ENCODE measurements at regions of chr7 and their contacts with region 1.

Region 1: GRCh38 chr7:64098-64915 is 128.1 kb upstream of the FAM20C start:
- DNase-seq: peak; percentile 42
- H3K4me3 ChIP-seq: no peak overlapping the region
- H3K27ac ChIP-seq: no peak overlapping the region
- H3K4me1 ChIP-seq: peaks cover 10% of the 10 kb centered on the region
- H3K27me3 ChIP-seq: no peaks in the 10 kb centered on the region
- CTCF ChIP-seq: peak; percentile 49 to 53

Region 2: DNA sequence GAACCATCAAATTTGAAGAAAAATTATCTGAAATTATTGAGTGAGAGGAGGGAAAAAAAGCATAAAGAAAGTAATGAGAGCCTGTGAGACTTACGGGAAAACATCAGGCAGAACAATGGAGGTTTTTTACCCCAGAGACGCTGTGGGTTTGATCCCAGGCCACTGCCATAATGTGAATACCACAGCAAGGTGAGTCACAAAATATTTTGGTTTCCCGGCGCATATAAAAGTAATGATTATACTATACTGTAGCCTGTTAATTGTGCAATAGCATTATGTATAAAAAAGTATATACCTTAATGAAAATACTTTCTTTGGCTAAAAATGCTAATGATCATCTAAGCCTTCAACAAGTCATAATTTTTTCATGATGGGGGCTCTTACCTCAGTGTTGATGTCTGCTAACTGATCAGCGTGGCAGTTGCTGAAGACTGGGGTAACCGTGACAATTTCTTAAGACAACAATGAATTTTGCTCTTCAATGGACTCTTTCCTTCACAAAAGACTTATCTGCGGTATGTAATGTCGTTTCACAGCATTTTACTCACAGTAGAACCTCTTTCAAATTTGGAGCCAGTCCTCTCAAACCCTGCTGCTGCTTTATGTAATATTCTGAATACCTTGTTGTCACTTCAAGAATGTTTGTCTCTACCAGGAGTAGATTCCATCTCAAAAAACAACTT is 31.0 kb after region 1 on chr7:
- CTCF ChIA-PET with region 1: no interaction called
- dilution Hi-C with region 1: no loop called
- in situ Hi-C with region 1: no loop called
- intact Hi-C with region 1: no loop called
- DNase-seq: peak; percentile 74
- H3K4me3 ChIP-seq: peak overlapping the region in 2 of 3 experiments; percentile 1 to 23
- H3K27ac ChIP-seq: peak overlapping the region; percentile 78
- H3K4me1 ChIP-seq: peaks cover 44% of the 10 kb centered on the region
- H3K27me3 ChIP-seq: no peaks in the 10 kb centered on the region
- CTCF ChIP-seq: no peak

Region 3: DNA sequence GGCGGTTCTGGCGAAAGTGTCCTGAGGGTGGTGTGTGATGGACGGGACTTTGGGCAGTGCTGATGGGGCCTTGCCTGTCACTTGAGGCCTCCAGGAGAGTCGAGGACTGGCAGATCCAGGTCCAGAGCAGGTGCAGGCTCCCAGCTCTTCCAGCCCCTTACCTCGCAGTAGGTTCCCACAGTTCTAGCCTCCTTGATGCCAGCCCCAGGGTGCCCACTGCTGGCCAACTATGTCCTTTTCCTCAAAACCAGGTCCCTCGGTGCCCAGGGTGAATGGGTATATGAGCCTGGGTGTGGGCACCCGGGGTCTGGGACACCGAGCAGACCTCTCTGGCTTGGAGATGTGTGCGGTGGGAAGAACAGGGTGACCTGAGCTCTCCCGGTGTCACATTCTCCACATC is 136.4 kb after region 1 on chr7:
- CTCF ChIA-PET with region 1: no interaction called
- dilution Hi-C with region 1: no loop called
- in situ Hi-C with region 1: no loop called
- intact Hi-C with region 1: loop called (anchors 1 kb)
- DNase-seq: no peak
- H3K4me3 ChIP-seq: no peak overlapping the region
- H3K27ac ChIP-seq: no peak overlapping the region
- H3K4me1 ChIP-seq: peaks cover 14% of the 10 kb centered on the region
- H3K27me3 ChIP-seq: no peaks in the 10 kb centered on the region
- CTCF ChIP-seq: peak in 1 of 2 donors; percentile 30

Region 4: DNA sequence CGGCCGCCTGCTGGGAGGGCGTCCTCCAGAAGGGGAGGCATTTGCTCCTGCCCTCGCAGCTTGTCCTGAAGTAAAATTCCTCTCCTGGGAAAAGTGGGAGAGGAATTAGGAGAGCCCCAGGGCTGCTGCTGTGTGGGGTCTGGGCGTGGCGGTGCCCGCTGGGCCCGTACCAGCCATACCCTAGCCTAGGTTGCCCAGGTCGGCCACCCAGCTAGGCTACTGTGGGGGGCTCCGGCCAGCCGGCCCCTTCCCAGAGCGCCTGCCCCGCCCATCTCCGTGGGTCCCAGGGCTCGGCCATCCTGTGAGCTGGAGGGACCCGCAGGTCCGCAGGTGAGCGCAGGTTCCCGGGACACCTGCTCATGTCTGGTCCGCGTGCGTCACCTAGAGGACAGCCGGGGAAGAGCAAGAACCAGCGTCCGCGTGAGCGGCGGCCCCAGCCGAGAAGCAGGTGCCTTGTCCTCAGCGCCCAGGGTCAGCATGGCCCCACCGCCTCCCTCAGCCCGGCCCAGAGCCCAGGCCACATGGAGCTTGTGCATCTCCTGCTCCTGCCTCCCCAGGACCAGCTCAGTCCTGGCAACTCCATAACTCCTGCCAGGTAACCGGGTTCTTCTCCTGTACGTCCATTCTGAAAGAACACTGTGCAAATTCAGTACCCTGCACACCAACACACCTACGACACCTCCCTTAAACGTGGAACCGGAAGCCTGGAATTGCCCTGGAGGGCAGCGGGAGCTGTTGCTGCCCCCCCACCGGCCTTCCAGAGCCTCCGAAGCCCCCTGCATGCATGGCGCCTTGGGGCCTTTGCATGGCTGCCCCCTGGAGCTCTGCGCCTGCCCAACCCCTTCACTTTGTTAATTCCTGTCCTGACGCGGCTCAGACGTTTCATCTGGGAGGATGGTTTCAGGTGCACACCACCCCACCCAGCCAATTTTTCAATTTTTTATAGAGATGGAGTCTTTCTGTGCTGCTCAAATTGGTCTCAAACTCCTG is 202.8 kb after region 1 on chr7:
- CTCF ChIA-PET with region 1: no interaction called
- dilution Hi-C with region 1: no loop called
- in situ Hi-C with region 1: no loop called
- intact Hi-C with region 1: loop called (anchors 1 kb)
- DNase-seq: peak; percentile 20
- H3K4me3 ChIP-seq: no peak overlapping the region
- H3K27ac ChIP-seq: no peak overlapping the region
- H3K4me1 ChIP-seq: no peaks in the 10 kb centered on the region
- H3K27me3 ChIP-seq: no peaks in the 10 kb centered on the region
- CTCF ChIP-seq: no peak

Region 5: DNA sequence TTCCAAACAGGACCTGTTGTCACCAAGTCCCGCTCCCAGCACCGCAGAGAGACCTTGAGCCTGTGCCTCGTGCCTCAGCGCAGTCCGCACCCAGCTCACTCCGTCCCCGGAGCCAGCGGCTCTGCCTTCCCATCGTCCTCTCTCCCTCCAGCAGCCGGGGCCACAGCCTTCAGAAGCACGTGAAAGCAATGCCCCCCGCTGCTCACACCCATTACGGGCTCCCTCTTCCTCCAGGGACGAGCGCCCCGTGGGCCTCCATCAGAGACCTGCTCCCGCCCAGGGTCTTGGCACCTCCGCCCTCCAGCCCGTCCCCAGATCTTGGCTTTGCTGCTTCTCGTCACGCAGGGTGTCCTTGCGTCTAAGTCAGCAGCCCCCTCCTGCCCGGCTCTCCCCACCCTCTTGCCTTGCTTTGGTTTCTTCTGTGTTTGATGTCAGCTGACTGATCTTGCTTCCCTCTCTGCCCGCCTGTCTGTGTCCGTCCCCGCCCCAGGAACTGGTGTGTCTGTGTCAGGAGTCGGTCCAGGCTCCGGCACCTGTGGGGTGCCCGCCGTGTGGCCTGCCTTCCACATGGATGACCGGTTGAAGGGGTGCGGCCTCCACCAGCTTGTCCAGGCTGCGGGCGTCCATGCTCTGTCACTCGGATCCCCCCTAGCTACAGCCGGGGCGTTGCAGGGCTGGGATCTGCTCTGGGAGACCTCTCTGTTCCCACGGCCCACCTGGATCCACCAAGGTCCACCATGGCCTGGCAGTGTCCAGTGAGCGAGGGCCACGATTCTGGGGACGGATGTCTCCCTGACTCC is 287.6 kb after region 1 on chr7:
- CTCF ChIA-PET with region 1: no interaction called
- dilution Hi-C with region 1: no loop called
- in situ Hi-C with region 1: no loop called
- intact Hi-C with region 1: no loop called
- DNase-seq: no peak
- H3K4me3 ChIP-seq: no peak overlapping the region
- H3K27ac ChIP-seq: no peak overlapping the region
- H3K4me1 ChIP-seq: peaks cover 27% of the 10 kb centered on the region
- H3K27me3 ChIP-seq: no peaks in the 10 kb centered on the region
- CTCF ChIP-seq: no peak

Measured in mammary epithelial cell (primary cell).